ENCODE measurements at regions of chr20 and their contacts with region 1.

Region 1: GRCh38 chr20:61560361-61560853 is 308.3 kb downstream of the CDH4 start:
- DNase-seq: peak; percentile 26
- H3K4me3 ChIP-seq: no peak overlapping the region
- CTCF ChIP-seq: peak; percentile 42

Region 2: DNA sequence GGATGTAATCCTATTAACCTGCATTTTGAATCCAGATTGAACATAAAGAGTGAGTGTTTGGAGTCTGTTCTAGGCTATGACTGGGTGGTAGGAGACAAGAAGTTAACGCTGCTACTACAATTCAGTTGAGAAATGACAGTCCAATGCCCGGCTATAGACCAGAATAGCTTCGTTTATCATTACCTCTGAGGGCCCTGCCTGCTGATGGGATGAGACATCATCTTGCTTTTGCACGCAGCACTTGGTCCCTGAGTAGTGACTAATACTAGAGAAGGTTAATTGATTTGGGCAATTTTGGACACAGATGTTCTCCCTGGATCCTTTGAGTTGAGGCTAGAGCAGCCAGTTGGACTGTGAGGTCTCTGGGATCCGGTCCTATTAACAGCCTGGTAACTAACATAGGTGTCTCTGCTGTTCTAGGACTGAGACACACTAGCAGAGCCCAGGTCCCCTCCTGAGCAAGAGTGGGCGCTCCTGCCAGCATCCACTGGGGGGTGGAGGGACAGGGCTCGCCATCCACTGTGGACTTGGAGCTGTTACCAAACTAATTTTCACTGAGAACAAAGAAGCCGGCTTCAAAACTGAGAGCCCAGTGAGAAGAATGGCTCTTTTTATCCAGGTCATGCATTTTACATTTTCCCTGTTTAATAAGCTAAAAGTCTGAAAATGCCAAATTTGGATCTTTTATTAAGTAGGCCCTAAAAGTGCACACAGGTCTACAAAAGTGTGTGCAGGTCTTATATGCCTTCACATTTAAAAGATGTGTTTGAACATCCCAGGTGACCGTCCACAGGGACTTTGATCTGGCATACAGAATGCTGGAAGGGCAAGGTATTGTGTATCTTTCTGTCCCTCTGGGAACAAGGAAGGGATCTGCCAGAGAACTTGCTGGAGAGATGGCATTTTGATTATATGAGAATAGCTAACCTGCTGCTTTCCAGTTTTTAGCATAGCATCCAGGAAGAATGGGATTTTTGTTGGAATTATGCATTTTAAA is 95.8 kb before region 1 on chr20:
- in situ Hi-C with region 1: loop called (anchors 5 kb)
- DNase-seq: no peak
- H3K4me3 ChIP-seq: no peak overlapping the region
- CTCF ChIP-seq: no peak

Region 3: GRCh38 chr20:61628901-61629601 is 68.6 kb after region 1 on chr20:
- in situ Hi-C with region 1: loop called (anchors 5 kb)
- DNase-seq: peak; percentile 13
- H3K4me3 ChIP-seq: no peak overlapping the region
- CTCF ChIP-seq: no peak

Measured in astrocyte of the cerebellum (primary cell).